ENCODE measurements at regions of chr15 and their contacts with region 1.

Region 1: DNA sequence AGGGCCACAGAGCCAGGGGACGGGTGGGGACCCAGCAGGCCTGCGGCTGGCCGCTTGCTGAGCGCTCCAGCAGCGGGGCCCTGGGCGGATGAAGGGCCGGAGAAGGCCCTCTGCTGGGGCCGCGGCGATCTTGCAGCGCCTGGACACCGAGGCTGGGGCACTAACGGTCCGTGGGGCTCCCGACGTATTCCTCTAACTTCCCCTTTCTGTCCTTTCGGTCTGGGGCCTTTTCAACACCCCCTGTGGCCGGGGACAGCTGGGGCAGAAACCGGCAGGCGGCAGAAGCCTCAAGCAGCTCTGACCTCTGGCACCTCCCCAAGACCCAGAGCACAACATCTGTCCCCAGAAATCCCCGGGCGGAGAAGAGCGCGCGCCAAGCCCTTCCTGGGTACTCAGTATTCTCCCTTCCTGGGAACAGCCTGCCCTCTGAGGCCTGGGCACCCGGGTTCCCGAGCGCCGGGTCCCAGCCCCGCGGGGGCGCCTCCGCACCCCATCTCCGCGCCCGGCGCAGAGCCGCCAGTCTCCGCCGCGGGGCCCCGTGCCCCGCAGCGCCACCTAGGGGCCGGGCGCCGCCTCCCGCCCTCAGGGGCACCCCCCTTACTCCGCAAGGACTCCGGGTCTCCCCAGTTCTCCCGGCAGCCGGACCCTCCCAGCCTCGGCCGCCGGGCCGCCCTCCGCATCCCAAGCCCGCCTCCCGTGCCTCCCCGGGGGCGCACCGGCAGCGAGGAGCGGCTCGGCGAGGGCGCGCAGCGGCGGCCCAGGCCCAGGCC is 582 bp upstream of the SLCO3A1 start:
- DNase-seq: peak; percentile 93
- H3K4me3 ChIP-seq: peak overlapping the region; percentile 79 to 87 (median 82)
- H3K27ac ChIP-seq: peak overlapping the region; percentile 87 to 96 (median 96)
- H3K4me1 ChIP-seq: peaks cover 40 to 55% (median 49%) of the 10 kb centered on the region in 4 donors
- H3K27me3 ChIP-seq: no peaks in the 10 kb centered on the region
- CTCF ChIP-seq: peak; percentile 68 to 75 (median 68)
- EP300 ChIP-seq: no peak
- POLR2A ChIP-seq: no peak

Region 2: GRCh38 chr15:91302588-91303439 is 550.1 kb before region 1 on chr15:
- intact Hi-C with region 1: loop called (anchors 5 kb)
- DNase-seq: no peak
- H3K4me3 ChIP-seq: no peak overlapping the region
- H3K27ac ChIP-seq: no peak overlapping the region
- H3K4me1 ChIP-seq: peaks cover 0 to 10% (median 6%) of the 10 kb centered on the region in 4 donors
- H3K27me3 ChIP-seq: peaks cover 0 to 44% (median 0%) of the 10 kb centered on the region in 4 donors
- CTCF ChIP-seq: peak; percentile 67 to 75 (median 73)
- EP300 ChIP-seq: no peak
- POLR2A ChIP-seq: no peak

Region 3: GRCh38 chr15:91897585-91898372 is 44.9 kb after region 1 on chr15:
- intact Hi-C with region 1: no loop called
- DNase-seq: no peak
- H3K4me3 ChIP-seq: no peak overlapping the region
- H3K27ac ChIP-seq: no peak overlapping the region
- H3K4me1 ChIP-seq: peaks cover 0 to 23% (median 0%) of the 10 kb centered on the region in 4 donors
- H3K27me3 ChIP-seq: no peaks in the 10 kb centered on the region
- CTCF ChIP-seq: no peak
- EP300 ChIP-seq: no peak
- POLR2A ChIP-seq: no peak

Region 4: GRCh38 chr15:91926908-91927270 is 74.0 kb after region 1 on chr15:
- intact Hi-C with region 1: loop called (anchors 5 kb)
- DNase-seq: no peak
- H3K4me3 ChIP-seq: no peak overlapping the region
- H3K27ac ChIP-seq: peak overlapping the region in 3 of 4 donors; percentile 29 to 35 (median 31)
- H3K4me1 ChIP-seq: peaks cover 41 to 71% (median 47%) of the 10 kb centered on the region in 4 donors
- H3K27me3 ChIP-seq: no peaks in the 10 kb centered on the region
- CTCF ChIP-seq: no peak
- EP300 ChIP-seq: no peak
- POLR2A ChIP-seq: no peak

Region 5: GRCh38 chr15:91942676-91943576 is 90.0 kb after region 1 on chr15:
- intact Hi-C with region 1: loop called (anchors 5 kb)
- DNase-seq: peak; percentile 97
- H3K4me3 ChIP-seq: peak overlapping the region; percentile 11 to 33 (median 22)
- H3K27ac ChIP-seq: peak overlapping the region; percentile 58 to 62 (median 62)
- H3K4me1 ChIP-seq: peaks cover 70 to 77% (median 72%) of the 10 kb centered on the region in 4 donors
- H3K27me3 ChIP-seq: no peaks in the 10 kb centered on the region
- CTCF ChIP-seq: no peak
- EP300 ChIP-seq: no peak
- POLR2A ChIP-seq: no peak

Region 6: DNA sequence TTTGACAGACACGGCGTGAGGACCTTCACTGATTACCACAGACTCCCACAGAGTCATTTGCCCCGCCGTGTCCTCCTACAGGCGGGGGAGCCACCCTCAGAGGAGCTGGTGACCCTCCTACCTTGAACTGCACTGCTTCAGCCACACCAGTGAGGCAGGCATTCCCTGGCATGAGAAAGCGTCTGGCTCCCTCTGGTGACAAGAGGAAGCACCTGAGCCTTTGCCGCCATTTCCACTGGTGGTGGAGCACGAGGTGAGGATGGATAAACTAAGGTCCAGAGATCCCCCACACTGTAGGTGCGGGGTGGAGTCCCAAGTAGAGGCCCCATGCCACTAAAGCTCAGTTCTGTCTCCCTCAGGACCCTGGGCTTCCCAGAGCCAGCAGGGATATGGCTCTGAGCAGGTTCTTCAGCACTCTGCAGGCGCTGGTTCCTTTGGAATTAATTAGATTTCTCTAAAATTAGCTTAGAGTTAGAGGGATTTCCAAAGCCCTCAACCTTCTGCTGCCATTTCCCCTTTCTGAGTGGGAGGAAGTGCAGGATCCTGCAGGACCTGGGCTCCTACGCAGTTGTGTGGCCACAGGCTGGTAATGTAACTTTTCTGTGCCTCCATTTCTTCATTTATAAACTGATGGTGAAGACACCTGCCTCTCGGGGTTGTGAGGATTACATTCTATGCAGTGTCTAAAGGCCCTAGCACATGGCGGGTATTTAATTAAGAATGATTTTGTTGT is 224.6 kb after region 1 on chr15:
- intact Hi-C with region 1: loop called (anchors 5 kb)
- DNase-seq: no peak
- H3K4me3 ChIP-seq: no peak overlapping the region
- H3K27ac ChIP-seq: no peak overlapping the region
- H3K4me1 ChIP-seq: peaks cover 31 to 44% (median 40%) of the 10 kb centered on the region in 4 donors
- H3K27me3 ChIP-seq: no peaks in the 10 kb centered on the region
- CTCF ChIP-seq: peak; percentile 63 to 77 (median 63)
- EP300 ChIP-seq: no peak
- POLR2A ChIP-seq: no peak

Measured in esophagus muscularis mucosa (tissue), 4 donors.